Activated naive CD8-positive, alpha-beta T cell treated with anti-CD3 and anti-CD28 coated beads, Interleukin-2, amount 10 ng/mL, durations not matched to agents 7 days and 5 days (primary cell): ENCODE measurements at regions of chr6 and their contacts with region 1.

Region 1: GRCh38 chr6:107618672-107619071 is 128.8 kb downstream of the SOBP start:
- DNase-seq: peak; percentile 67
- ATAC-seq: peak; percentile 99
- H3K4me3 Mint-ChIP-seq: peak overlapping the region; percentile 48
- H3K27ac Mint-ChIP-seq: peak overlapping the region; percentile 91
- H3K4me1 Mint-ChIP-seq: peaks cover 36% of the 10 kb centered on the region
- H3K27me3 Mint-ChIP-seq: peaks cover 3% of the 10 kb centered on the region

Region 2: DNA sequence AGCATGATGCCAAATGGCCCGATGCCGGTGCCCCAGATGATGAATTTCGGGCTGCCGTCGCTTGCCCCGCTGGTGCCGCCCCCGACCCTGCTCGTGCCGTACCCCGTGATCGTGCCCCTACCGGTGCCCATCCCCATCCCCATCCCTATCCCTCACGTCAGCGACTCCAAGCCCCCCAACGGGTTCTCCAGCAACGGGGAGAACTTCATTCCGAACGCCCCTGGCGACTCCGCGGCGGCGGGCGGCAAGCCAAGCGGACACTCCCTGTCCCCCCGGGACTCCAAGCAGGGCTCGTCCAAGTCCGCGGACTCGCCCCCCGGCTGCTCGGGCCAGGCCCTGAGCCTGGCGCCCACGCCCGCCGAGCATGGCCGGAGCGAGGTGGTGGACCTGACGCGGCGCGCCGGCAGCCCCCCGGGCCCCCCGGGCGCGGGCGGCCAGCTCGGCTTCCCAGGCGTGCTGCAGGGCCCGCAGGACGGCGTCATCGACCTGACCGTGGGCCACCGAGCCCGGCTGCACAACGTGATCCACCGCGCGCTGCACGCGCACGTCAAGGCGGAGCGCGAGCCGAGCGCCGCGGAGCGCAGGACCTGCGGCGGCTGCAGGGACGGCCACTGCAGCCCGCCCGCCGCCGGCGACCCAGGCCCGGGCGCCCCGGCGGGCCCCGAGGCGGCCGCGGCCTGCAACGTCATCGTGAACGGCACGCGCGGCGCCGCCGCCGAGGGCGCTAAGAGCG is 15.8 kb after region 1 on chr6:
- POLR2A ChIA-PET with region 1: interaction called, 14 read pairs
- DNase-seq: peak; percentile 58
- ATAC-seq: peak; percentile 74
- H3K4me3 Mint-ChIP-seq: peak overlapping the region; percentile 66
- H3K27ac Mint-ChIP-seq: no peak overlapping the region
- H3K4me1 Mint-ChIP-seq: peaks cover 13% of the 10 kb centered on the region
- H3K27me3 Mint-ChIP-seq: peaks cover 60% of the 10 kb centered on the region

Region 3: GRCh38 chr6:107668743-107669474 is 50.2 kb after region 1 on chr6:
- POLR2A ChIA-PET with region 1: interaction called, 11 read pairs
- DNase-seq: peak; percentile 68
- ATAC-seq: peak; percentile 96
- H3K4me3 Mint-ChIP-seq: peak overlapping the region; percentile 50
- H3K27ac Mint-ChIP-seq: peak overlapping the region; percentile 86
- H3K4me1 Mint-ChIP-seq: peaks cover 37% of the 10 kb centered on the region
- H3K27me3 Mint-ChIP-seq: no peaks in the 10 kb centered on the region